GM23248 (cell line): ENCODE measurements at regions of chr22 and their contacts with region 1.

Region 1: DNA sequence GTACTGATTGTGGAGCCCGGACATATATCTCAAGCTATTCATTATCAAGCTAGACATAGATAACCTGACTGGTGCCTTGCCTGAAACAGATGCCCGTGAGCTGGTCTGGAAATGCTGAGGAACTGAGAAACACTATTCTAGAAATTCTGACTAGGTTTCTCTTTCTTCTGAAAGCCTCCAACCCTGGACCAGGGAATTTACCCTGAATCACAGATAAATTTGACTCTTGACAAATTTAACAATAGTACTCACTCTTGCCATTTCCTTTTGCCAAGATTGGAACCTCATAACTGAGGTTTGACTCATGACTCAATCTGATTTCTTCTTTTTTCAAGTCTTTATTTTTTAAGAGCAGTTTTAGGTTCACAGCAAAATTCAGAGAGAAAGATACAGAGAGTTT is 189.6 kb upstream of the SYN3 start:
- DNase-seq: peak; percentile 59
- H3K4me3 ChIP-seq: no peak overlapping the region
- H3K27ac ChIP-seq: no peak overlapping the region
- H3K4me1 ChIP-seq: no peaks in the 10 kb centered on the region
- H3K27me3 ChIP-seq: no peaks in the 10 kb centered on the region; the same call in none of the 2 replicates

Region 2: GRCh38 chr22:33129621-33130020 is 118.1 kb before region 1 on chr22:
- in situ Hi-C with region 1: no loop called
- DNase-seq: no peak
- H3K4me3 ChIP-seq: no peak overlapping the region
- H3K27ac ChIP-seq: no peak overlapping the region
- H3K4me1 ChIP-seq: no peaks in the 10 kb centered on the region
- H3K27me3 ChIP-seq: no peaks in the 10 kb centered on the region

Region 3: GRCh38 chr22:33188326-33188725 is 59.4 kb before region 1 on chr22:
- in situ Hi-C with region 1: loop called (anchors 10 kb)
- DNase-seq: peak; percentile 14
- H3K4me3 ChIP-seq: no peak overlapping the region
- H3K27ac ChIP-seq: no peak overlapping the region
- H3K4me1 ChIP-seq: no peaks in the 10 kb centered on the region
- H3K27me3 ChIP-seq: no peaks in the 10 kb centered on the region

Region 4: DNA sequence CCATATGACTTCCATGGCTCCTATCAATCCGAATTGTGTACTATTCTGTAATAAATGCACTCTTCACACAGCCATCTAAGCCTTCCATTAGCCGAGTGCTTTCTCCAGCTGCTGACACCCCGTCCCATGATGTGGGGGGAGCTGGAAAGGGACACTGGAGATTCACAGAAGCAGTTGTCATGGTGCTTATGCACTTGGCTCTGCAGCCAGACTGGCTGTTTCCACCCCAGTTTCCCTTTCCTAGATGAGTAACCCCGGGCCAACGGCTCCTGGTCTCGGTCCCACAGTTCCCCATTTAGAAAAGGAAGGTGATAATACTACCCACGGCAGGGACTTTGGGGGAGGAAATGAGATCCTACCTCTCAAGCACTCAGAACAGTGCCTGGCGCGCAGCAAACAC is 55.3 kb after region 1 on chr22:
- in situ Hi-C with region 1: no loop called
- DNase-seq: no peak
- H3K4me3 ChIP-seq: no peak overlapping the region
- H3K27ac ChIP-seq: no peak overlapping the region
- H3K4me1 ChIP-seq: no peaks in the 10 kb centered on the region
- H3K27me3 ChIP-seq: no peaks in the 10 kb centered on the region